ENCODE measurements at regions of chr17 and their contacts with region 1.

Region 1: GRCh38 chr17:2172077-2172851 is 117.4 kb downstream of the HIC1 start:
- DNase-seq: peak; percentile 97
- H3K4me3 ChIP-seq: peak overlapping the region; percentile 18
- H3K27ac ChIP-seq: peak overlapping the region; percentile 99
- H3K27me3 ChIP-seq: no peaks in the 10 kb centered on the region
- CTCF ChIP-seq: no peak

Region 2: DNA sequence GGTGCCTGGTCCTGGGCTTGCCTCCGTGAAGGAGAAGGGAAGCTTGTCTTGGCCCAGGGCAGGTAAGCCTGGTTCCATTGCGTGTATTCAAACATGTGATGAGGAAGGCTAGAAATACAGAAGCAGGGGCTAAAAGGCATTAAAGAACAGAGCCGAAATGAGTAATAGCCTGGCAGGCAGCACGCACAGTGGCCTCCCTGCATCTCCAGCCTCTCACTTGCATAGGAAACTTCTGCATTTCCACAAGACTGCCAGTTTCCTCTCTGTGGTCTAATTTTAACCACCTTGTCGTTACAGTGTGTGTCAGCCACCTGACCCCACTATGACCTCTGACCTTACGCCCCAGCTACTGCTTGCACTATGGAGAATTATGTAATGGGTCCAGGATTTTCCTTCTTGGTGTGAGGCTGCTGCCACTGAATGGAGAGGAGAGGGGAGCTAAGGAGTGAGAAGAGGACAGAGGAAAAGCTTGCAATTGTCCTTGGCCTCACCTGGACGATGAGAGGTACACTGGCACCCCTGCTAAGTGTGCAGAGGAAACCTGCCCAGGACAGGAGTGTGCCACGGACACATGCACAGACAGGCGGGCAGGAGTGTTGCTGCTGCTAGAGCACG is 84.6 kb before region 1 on chr17:
- in situ Hi-C with region 1: loop called (anchors 10 kb)
- DNase-seq: peak; percentile 47
- H3K4me3 ChIP-seq: no peak overlapping the region
- H3K27ac ChIP-seq: peak overlapping the region; percentile 40
- H3K27me3 ChIP-seq: no peaks in the 10 kb centered on the region
- CTCF ChIP-seq: no peak

Measured in brain microvascular endothelial cell (primary cell).